Sciatic nerve (tissue), 2 donors: ENCODE measurements at regions of chr7 and their contacts with region 1.

Region 1: DNA sequence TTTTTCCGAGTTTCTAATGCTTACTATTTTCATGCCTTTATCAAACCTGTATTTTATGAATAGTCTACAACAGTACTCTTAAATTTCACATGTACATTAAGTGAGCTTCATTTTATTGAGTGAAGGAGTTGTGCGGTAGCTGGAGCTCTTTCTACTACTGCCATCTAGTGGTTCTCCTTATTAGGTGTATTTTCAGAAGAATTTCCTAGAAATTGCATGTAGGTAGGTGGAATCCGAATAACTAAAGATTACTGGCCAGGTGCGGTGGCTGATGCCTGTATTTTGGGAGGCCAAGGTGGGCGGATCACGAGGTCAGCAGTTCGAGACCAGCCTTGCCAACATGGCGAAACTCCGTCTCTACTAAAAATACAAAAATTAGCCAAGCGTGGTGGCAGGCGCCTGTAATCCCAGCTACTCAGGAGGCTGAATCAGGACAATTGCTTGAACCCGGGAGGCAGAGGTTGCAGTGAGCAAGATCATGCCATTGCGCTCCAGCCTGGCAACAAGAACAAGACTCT is 38.3 kb downstream of the LRRC72 start:
- DNase-seq: no peak
- ATAC-seq: peak; percentile 65

Region 2: GRCh38 chr7:16078076-16078952 is 486.7 kb before region 1 on chr7:
- intact Hi-C with region 1: loop called (anchors 5 kb)
- DNase-seq: no peak
- ATAC-seq: peak; percentile 82

Region 3: DNA sequence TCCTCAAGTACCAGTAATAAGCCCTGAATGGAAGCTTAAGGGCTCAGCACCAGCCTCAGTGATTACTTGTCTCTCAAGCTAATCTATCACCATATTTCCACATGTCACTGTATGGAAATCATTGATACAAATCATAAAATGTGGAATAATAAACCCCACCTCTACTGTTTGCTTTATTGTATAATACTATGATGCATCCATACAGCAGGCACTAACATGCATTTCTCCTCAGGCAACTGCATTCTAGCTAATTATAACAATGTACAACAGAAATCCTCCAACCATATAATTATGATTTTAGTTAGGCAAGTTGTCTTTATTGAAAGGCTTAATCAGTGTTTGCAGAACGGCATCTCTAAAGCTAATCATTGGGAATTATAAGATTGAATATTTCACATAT is 169.8 kb before region 1 on chr7:
- intact Hi-C with region 1: no loop called
- DNase-seq: no peak
- ATAC-seq: no peak

Region 4: DNA sequence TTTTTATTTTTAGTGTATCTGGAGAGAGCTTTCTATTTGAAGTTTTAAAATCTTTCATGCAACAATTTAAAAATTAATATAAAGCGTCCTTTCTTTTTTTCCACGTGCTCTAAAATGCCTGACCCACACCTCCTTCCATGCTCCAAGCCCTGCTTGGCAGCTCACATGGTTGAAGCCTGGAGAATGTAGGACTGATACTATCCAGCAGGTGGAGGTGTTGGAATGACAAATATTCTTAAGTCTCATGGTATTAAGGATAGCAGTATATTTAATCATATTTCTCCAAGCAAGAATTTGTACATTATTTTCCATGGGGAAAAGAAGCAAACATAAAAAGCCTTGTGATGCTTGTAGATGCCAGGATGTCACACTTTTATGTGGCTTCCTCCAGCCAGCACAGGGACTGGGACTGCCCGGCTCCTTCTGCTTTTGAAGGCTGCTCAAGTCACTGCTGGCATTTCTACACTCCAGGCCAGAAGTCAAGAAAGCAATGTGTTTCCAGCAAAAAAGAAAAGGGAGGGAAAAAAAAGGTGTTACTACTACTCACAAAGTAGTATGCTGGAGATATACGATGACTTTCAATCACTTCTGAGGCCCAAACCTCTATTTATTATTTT is 130.8 kb after region 1 on chr7:
- intact Hi-C with region 1: no loop called
- DNase-seq: no peak
- ATAC-seq: peak; percentile 59